ENCODE measurements at regions of chr2 and their contacts with region 1.

Region 1: GRCh38 chr2:71510196-71510807 is 56.9 kb downstream of the DYSF start:
- DNase-seq: peak; percentile 73
- ATAC-seq: peak; percentile 53 to 57

Region 2: DNA sequence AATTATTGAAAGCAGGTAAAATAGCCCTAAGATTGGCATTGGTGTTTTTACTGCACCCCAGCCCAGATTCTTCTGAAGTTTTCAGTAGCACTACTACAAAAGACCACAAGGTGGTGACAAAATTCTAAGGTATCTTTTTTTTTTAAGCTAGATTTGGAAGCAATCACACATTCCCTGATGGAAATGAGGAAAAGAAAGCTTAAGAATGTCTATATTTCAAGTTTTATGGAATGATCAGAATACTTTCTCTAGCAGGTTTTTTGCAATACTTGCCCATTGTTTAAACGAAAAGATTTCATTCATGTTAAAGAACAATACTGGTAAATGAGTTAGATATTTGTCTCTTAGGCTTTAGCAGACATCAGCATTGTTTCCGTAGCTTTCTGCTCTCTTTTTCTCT is 210.8 kb before region 1 on chr2:
- intact Hi-C with region 1: loop called (anchors 5 kb)
- DNase-seq: no peak
- ATAC-seq: no peak

Region 3: GRCh38 chr2:71410696-71411095 is 99.6 kb before region 1 on chr2:
- intact Hi-C with region 1: no loop called
- DNase-seq: no peak
- ATAC-seq: no peak

Region 4: DNA sequence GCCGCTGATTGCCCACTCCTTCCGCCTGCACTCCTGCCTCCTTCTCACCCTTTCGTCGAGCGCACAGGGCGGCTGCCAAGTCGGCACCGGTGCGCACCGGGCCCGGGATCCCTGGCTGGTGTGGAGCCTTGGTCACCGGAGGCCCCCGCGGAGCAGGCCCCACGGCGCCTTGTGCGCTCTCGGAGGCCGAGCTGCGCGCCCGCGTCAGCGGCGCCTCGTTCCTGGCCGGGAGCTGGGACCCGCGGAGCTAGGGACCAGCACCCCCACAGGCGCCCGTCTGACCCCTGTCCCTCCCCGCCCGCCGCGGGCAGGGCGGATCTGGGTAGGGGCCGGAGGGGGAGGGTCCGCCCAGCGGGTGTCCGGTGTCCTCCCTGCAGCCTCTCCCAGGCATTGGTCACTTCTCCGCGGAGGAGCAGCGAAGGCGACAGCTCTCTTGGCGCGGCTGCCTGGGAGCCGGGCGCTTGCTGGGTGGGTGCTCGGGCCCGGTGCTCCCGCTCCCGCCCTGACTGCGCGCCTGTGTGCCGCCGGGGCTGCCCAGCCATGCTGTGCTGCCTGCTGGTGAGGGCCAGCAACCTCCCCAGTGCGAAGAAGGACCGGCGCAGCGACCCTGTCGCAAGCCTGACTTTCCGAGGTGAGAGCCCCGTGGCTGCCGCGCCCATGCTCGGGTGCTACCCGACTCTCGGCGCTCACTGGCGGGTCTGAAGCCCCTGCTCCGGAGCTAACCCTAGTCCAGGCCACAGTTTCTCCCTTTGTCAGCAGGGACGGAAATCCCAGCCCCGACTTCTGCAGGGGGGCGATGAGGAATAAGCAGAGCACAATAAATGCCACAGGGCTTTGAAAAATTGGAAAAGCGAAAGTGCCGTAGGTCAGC is 43.8 kb before region 1 on chr2:
- intact Hi-C with region 1: loop called (anchors 2 to 10 kb)
- DNase-seq: peak; percentile 70
- ATAC-seq: peak; percentile 81 to 83

Region 5: DNA sequence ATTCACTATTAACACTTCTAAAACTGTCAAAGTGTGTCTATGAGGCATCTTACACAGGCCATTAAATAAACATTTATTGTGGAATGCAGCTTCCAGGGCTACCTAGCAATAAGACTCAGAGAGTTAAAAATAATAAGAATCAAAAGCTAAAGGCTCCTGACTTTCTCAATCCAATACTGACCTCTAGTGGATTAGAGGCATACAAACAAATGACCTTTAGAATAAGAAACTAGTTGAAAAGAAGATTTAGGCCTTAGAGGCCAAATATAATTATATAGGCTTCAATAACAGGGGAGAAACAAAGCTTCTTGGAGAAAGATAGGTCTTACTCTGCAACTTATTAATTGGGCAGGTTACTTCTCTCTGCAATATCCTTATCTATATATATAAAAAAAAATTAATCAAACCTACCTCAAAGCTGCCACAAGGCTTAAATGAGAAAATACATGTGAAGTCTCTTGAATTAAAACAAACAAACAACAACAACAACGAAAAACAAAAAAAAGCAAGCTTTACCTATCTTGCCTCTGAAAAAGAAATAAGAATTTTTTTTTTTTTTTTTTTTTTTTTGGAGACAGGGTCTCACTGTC is 1069.4 kb after region 1 on chr2:
- intact Hi-C with region 1: no loop called
- DNase-seq: no peak
- ATAC-seq: peak; percentile 38 to 47

Measured in left cardiac atrium (tissue), 4 donors.